Ovary (tissue), 10 donors: ENCODE measurements at regions of chr14 and their contacts with region 1.

Region 1: DNA sequence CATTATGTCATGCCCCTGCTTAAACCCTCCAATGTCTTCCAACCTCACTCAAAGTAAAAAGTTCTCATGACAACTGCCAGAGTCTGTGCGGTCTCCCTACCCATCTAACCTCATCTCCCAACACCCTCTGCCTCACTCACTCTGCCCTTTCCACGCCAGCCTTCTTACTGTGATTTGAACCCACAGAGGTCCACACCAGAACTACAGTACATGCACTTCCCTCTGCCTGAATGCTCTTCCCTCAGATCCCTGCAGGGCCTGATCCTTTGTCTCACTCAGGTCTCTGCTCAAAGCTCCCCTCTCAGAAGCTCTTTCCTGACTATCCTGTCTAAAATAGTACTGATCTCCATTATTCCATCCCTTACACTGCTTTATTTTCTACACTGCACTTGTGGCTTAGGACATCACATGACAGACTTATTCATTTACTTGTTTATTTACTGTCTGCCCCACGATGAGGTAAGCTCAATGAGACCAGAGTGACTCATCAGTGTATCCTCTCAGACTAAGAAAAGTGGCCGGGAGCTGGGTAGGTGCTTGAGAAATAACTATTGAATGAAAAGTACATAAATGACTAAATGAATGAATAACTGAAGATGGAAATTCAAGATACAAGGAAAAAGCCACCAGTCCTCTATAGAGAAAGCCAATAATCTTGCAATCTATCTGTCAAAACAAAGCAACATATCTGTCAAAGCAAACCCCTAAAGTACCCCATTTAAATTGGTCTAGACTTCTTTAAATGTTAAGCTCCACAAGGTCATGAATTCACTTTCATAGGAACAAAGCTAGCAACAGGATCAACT is 17.1 kb downstream of the POMT2 start:
- DNase-seq: no peak
- H3K4me3 ChIP-seq: no peak overlapping the region
- H3K27ac ChIP-seq: no peak overlapping the region
- H3K4me1 ChIP-seq: peaks cover 5% of the 10 kb centered on the region
- H3K27me3 ChIP-seq: no peaks in the 10 kb centered on the region
- CTCF ChIP-seq: no peak
- EP300 ChIP-seq: no peak
- POLR2A ChIP-seq: no peak

Region 2: DNA sequence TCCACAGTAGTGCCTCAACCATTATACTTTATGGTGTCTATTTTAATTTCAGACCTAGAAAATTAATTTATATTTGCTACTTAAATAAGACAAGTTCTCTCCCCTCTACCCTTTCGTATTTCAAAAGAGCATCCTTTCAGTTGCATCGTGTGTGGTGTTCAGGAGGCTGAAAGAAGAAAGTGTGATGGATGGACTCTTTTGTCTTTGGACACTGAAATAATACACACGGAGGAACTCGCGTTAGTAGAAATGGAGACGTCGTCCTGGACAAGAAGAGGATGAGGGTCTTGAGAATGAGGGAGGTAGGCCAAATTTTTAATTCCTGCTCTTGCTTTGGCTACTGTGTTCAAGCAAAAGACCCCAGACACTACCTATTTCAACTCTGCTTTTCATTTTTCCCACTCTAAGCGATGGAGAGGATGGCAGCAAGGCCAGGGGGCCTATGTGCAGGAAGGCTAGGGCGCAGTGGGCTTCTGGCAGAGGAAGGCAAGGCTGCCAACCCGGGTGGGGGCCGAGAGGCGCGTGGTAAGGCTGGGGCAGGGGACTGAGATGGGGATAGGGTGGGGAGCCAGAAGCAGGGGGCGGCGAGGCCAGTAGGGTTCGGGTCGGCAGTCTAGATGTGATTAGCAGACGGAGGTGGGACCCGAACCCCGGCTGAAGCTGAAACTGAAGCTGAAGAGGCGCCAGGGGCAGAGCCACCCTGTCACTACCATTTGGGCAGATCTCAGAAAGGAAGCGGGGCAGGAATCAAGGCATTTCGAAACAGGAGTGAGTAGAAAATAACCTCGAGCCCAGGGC is 72.6 kb after region 1 on chr14:
- intact Hi-C with region 1: loop called in 1 of 4 experiments (anchors 2 kb)
- DNase-seq: peak in 4 of 5 donors; percentile 23 to 44 (median 31)
- H3K4me3 ChIP-seq: peak overlapping the region; percentile 91
- H3K27ac ChIP-seq: peak overlapping the region; percentile 60 to 83
- H3K4me1 ChIP-seq: peaks cover 5% of the 10 kb centered on the region
- H3K27me3 ChIP-seq: no peaks in the 10 kb centered on the region
- CTCF ChIP-seq: no peak
- EP300 ChIP-seq: no peak
- POLR2A ChIP-seq: no peak